ENCODE measurements at regions of chr6 and their contacts with region 1.

Region 1: GRCh38 chr6:85642774-85643536 is at the start of gene SYNCRIP:
- DNase-seq: peak; percentile 98
- H3K4me3 Mint-ChIP-seq: peak within 1 kb of the TSS; percentile 97
- H3K27ac Mint-ChIP-seq: peak within 1 kb of the TSS; percentile 100
- H3K4me1 Mint-ChIP-seq: peaks cover 41% of the 10 kb centered on the region
- H3K27me3 Mint-ChIP-seq: peaks cover 4% of the 10 kb centered on the region
- total RNA-seq, gene SYNCRIP: 197 TPM in 2 replicates

Region 2: GRCh38 chr6:85482905-85483700 is 159.9 kb before region 1 on chr6:
- intact Hi-C with region 1: no loop called
- DNase-seq: peak; percentile 74
- H3K4me3 Mint-ChIP-seq: no peak overlapping the region
- H3K27ac Mint-ChIP-seq: peak overlapping the region; percentile 58
- H3K4me1 Mint-ChIP-seq: peaks cover 12% of the 10 kb centered on the region
- H3K27me3 Mint-ChIP-seq: no peaks in the 10 kb centered on the region

Region 3: DNA sequence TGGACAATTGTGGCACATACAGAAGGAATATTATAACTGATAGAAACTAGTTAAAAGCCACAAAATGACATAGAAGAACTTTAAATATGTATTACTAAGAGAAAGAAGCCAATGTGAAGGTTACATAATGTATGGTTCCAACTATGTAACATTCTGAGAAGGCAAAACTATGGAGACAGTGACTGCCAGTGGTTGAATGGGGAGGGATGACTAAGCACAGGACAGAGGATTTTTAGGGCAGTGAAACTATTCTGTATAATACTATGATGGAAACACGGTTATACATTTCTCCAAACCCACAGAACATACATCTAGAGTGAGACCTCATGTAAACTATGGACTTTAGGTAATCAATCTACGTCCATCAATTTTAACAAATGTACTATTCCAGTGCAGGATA is 22.6 kb before region 1 on chr6:
- intact Hi-C with region 1: loop called (anchors 2 kb)
- DNase-seq: no peak
- H3K4me3 Mint-ChIP-seq: no peak overlapping the region
- H3K27ac Mint-ChIP-seq: no peak overlapping the region
- H3K4me1 Mint-ChIP-seq: peaks cover 25% of the 10 kb centered on the region
- H3K27me3 Mint-ChIP-seq: no peaks in the 10 kb centered on the region

Region 4: DNA sequence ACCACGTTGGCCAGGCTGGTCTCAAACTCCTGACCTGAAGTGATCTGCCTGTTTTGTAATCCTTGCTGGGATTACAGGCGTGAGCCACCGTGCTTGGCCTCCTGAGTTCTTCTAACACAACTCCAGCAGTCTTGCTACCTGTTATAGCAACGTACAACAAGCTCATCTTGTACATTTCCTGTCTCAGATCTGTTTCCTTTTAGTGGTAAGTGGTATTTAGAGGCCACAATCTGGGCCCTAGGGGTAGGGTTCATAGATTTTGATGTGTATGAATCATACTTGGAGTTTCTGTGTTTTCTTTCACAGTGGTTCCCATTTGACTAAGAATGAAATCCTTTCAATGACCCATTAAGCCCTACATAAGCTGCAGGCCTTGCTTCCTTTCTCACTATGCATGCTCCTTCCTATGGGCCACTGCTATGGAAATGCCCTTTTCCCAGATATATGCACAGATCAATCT is 26.8 kb after region 1 on chr6:
- intact Hi-C with region 1: loop called (anchors 1 kb)
- DNase-seq: peak; percentile 52
- H3K4me3 Mint-ChIP-seq: peak overlapping the region; percentile 61
- H3K27ac Mint-ChIP-seq: peak overlapping the region; percentile 78
- H3K4me1 Mint-ChIP-seq: peaks cover 55% of the 10 kb centered on the region
- H3K27me3 Mint-ChIP-seq: no peaks in the 10 kb centered on the region

Region 5: DNA sequence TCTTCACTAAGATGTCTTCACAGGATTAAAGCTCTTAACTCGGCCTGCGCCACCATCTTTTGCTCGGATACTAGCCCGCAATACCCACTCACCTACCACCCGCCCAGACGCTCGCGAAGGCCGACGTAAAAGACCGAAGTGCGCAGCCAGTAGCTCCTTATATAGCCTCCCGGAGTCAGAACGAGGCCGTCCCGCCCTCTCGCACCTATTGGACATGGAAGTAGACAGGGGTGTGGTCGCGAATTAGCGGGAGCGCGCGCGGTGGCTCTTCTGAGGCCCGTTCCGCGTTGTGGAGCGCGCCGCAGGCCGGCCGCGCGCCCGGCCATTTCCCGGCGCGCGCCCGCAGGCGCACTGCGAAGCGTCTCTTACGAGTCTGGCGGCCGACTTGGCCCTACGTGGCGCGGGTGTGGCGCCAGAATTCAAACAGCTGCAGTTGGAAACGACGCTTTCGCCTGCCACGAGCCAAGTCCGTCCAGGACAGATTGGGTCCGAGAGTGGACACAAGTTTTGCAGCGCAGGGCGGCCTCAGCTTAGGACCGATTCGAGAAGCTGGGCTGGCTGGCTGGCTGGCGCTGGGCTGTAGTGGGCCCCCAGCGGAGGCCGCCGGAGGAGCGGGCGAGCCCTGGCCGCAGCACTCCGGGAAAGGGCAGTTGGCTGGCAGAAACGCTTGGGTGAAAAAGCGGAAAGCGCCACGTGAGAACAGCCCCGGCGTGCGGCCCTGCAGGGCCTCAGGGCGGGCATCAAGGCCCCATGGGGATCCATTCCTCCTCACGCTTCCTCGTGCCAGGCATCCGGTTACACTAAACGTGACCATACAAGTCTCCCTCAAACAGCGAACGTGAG is 35.9 kb after region 1 on chr6:
- intact Hi-C with region 1: loop called (anchors 1 kb)
- DNase-seq: peak; percentile 98
- H3K4me3 Mint-ChIP-seq: peak overlapping the region; percentile 99
- H3K27ac Mint-ChIP-seq: peak overlapping the region; percentile 84
- H3K4me1 Mint-ChIP-seq: peaks cover 39% of the 10 kb centered on the region
- H3K27me3 Mint-ChIP-seq: no peaks in the 10 kb centered on the region